Heart left ventricle (tissue), 16 donors: ENCODE measurements at regions of chr3 and their contacts with region 1.

Region 1: GRCh38 chr3:53160660-53161449 is at the start of gene PRKCD:
- DNase-seq: peak; percentile 86 to 92 (median 89)
- ATAC-seq: peak; percentile 72 to 90 (median 90)
- H3K4me3 ChIP-seq: peak within 1 kb of the TSS; percentile 39 to 98 (median 88)
- H3K27ac ChIP-seq: peak within 1 kb of the TSS; percentile 11 to 92 (median 83)
- H3K4me1 ChIP-seq: peaks cover 5 to 62% (median 23%) of the 10 kb centered on the region in 12 donors
- H3K27me3 ChIP-seq: peaks cover 0 to 7% (median 0%) of the 10 kb centered on the region in 9 donors
- CTCF ChIP-seq: peak in 10 of 12 donors; percentile 21 to 61 (median 51)
- POLR2A ChIP-seq: peak in 1 of 2 donors; percentile 48
- total RNA-seq, gene PRKCD: 5.3 to 44.5 (median 11.6) TPM

Region 2: GRCh38 chr3:53122933-53123305 is 37.9 kb before region 1 on chr3:
- intact Hi-C with region 1: loop called in 3 of 10 experiments (anchors 5 kb)
- DNase-seq: no peak
- ATAC-seq: peak in 3 of 4 donors; percentile 29 to 36 (median 29)
- H3K4me3 ChIP-seq: no peak overlapping the region
- H3K27ac ChIP-seq: peak overlapping the region in 9 of 12 donors; percentile 28 to 58 (median 52)
- H3K4me1 ChIP-seq: peaks cover 0 to 31% (median 10%) of the 10 kb centered on the region in 12 donors
- H3K27me3 ChIP-seq: no peaks in the 10 kb centered on the region
- CTCF ChIP-seq: no peak
- POLR2A ChIP-seq: no peak